ENCODE measurements at regions of chr2 and their contacts with region 1.

Region 1: DNA sequence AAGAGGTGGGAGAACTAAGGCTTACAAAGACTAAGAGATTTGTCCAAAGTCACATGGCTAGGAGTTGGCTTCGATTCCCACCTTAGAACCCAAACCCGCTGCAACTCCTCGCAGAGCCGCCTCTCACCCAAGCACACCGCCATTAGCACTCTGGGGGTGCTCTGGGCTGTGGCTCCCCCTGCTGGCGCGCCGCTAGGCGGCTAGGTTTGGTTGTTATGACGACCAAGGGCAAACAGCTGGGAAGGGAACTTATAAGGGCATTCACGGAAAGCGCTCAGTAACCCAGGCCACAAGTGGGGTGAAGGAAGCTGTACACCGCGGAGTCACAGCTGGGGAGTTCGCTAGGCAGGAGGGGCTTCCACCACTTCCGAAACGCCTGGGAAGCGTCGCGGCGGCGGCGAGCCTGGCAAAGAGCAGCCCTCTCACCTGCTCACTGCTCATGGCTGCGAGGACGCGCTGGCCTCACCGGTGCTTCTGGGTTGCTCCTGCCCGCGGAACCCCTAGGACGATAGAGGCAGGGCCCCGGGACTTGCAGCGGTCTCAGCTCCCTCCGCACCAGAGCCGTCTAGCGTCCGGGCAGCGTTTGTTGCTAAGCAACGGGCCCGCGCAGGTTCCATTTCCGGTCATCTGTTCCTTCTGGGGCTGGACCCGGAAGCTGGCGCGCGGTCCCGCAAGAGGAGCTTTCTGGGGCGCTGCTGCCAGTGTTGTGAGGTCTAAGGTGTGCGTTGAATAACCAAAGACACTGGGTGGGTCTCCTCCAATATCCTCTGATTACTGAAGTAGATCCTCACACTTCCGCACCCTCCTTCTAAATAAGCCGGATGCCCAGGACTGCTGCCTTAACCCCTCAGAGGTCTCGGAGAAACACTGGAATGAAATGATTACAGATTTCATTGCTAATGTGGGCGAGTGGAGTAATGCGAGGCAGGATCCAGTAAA is at the start of gene DNAH7:
- DNase-seq: peak; percentile 65
- ATAC-seq: peak; percentile 98
- H3K4me3 ChIP-seq: peak within 1 kb of the TSS; percentile 85 to 86
- H3K27ac ChIP-seq: peak within 1 kb of the TSS; percentile 86
- H3K4me1 ChIP-seq: peaks cover 8% of the 10 kb centered on the region; the same call in 1 of the 2 replicates
- H3K27me3 ChIP-seq: peaks cover 2% of the 10 kb centered on the region; the same call in 1 of the 2 replicates
- CTCF ChIP-seq: peak; percentile 98
- total RNA-seq, gene DNAH7: 0.98 TPM

Region 2: DNA sequence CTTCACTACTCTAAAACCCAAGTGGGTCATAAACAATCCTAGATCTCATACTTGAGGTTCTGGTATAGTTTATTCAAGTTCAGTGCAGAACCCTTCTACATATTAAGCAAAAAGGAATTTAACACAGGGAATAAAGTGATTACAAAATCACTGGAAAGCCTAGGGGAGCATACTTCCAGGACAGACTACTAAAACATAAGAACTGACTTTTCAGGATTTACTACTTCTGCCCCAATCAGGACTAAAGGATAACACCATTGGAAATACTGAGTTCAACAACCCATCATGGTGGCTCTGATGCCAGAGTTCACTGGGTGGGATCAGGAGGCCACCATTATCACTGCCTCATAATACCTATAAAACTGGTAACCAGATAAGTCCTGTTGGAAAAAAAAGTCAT is 123.5 kb before region 1 on chr2:
- CTCF ChIA-PET with region 1: no interaction called
- POLR2A ChIA-PET with region 1: no interaction called
- in situ Hi-C with region 1: no loop called
- intact Hi-C with region 1: loop called (anchors 5 kb)
- DNase-seq: no peak
- ATAC-seq: no peak
- H3K4me3 ChIP-seq: no peak overlapping the region
- H3K27ac ChIP-seq: no peak overlapping the region
- H3K4me1 ChIP-seq: no peaks in the 10 kb centered on the region
- H3K27me3 ChIP-seq: no peaks in the 10 kb centered on the region
- CTCF ChIP-seq: no peak

Measured in Panc1 (cell line).